Activated naive CD8-positive, alpha-beta T cell treated with anti-CD3 and anti-CD28 coated beads, Interleukin-2, amount 10 ng/mL, durations not matched to agents 7 days and 5 days (primary cell): ENCODE measurements at regions of chr20 and their contacts with region 1.

Region 1: GRCh38 chr20:36573103-36573794 is at the start of gene TGIF2:
- DNase-seq: peak; percentile 96
- ATAC-seq: peak; percentile 82
- H3K4me3 Mint-ChIP-seq: peak within 1 kb of the TSS; percentile 94
- H3K27ac Mint-ChIP-seq: peak within 1 kb of the TSS; percentile 97
- H3K4me1 Mint-ChIP-seq: peaks cover 32% of the 10 kb centered on the region
- H3K27me3 Mint-ChIP-seq: no peaks in the 10 kb centered on the region
- total RNA-seq, gene TGIF2: 32.2 to 33.1 TPM

Region 2: DNA sequence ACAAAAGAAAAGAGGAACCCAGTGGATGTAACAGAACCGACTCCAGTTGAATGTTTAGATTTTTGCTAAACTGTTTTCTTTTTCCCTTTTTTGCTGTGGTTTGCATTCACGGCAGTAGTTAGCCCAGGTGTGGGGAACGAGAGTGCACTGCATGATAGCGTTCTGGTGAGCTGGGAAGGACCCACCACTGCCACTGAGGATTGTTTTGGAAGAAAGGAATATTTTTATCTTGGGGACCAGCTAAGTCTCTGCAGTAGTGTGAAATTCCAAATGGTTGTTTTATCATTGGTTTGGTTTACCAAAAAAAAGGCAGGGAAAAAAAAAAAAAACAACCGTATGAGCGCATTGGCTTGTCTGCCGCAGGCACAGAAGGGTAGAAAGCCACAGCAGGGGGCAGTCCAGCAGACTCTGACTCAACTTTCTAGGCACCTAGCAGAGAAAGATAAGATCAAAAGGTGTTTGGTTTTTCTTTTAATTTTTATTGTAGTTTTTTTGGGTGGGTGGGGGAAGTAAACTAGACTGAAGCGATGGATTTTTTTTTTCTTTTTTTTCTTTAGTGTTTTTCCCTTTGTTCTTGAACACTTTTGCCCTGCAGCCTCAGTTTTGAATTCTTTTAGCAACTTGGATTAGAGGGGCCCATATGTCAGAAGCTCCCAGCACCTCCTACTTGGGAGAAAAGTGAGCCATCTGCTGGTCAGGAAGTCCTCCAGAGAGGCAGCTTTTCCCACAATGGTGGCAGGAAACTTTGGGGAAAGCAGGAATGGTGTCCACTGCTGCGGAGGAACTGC is 18.8 kb after region 1 on chr20:
- POLR2A ChIA-PET with region 1: interaction called, 195 read pairs
- DNase-seq: peak; percentile 41
- ATAC-seq: peak; percentile 51
- H3K4me3 Mint-ChIP-seq: peak overlapping the region; percentile 37
- H3K27ac Mint-ChIP-seq: peak overlapping the region; percentile 78
- H3K4me1 Mint-ChIP-seq: peaks cover 41% of the 10 kb centered on the region
- H3K27me3 Mint-ChIP-seq: no peaks in the 10 kb centered on the region